Endothelial cell of umbilical vein (primary cell): ENCODE measurements at regions of chr2 and their contacts with region 1.

Region 1: DNA sequence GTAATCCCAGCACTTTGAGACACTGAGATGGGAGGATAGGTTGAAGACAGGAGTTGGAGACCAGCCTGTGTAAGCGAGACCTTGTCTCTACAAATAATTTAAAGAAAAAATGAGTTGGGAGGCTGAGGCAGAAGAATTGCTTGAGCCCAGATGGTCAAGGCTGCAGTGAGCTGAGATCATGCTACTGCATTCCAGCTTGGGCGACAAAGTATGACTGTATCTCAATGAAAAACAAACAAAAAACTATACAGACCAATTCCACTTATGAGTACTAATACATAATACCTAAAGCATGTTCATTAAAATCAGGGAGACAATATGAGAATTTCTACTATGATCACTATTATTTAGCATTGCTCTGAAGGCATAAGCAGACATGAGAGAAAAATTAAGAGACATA is 12.6 kb downstream of the RNF149 start:
- DNase-seq: peak; percentile 60
- H3K4me3 ChIP-seq: no peak overlapping the region
- H3K27ac ChIP-seq: peak overlapping the region; percentile 83
- H3K4me1 ChIP-seq: peaks cover 37% of the 10 kb centered on the region
- H3K27me3 ChIP-seq: no peaks in the 10 kb centered on the region
- CTCF ChIP-seq: no peak
- POLR2A ChIP-seq: no peak

Region 2: GRCh38 chr2:101230541-101230993 is 65.3 kb before region 1 on chr2:
- CTCF ChIA-PET with region 1: no interaction called
- POLR2A ChIA-PET with region 1: no interaction called
- dilution Hi-C with region 1: no loop called
- intact Hi-C with region 1: no loop called
- DNase-seq: no peak
- H3K4me3 ChIP-seq: no peak overlapping the region
- H3K27ac ChIP-seq: no peak overlapping the region
- H3K4me1 ChIP-seq: no peaks in the 10 kb centered on the region
- H3K27me3 ChIP-seq: no peaks in the 10 kb centered on the region
- CTCF ChIP-seq: no peak
- POLR2A ChIP-seq: no peak

Region 3: DNA sequence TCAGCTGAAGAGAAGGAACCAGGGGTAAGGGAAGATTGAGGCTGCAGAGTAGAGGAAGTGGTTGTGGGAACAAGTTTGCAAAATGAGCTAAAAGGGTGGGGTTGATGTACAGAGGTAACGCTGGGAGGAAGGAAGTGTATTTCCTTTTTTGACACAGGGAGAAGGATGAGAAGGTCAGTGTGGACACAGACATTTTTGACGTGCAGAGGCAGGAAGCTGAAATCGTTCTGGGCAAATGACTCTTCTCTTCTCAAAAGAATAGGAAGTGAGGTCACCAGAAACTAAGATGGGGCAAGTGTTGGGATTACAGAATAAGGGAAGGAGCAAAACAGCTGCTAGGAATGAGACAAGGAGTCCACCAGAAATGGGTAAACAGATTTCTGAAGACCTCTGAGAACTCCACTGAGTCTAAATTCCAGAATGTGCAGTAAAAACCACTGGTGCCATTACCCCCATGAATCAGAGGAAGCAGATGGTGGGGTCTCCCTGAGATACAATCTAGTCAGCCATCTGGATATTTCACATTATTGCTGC is 32.6 kb after region 1 on chr2:
- CTCF ChIA-PET with region 1: no interaction called
- POLR2A ChIA-PET with region 1: no interaction called
- dilution Hi-C with region 1: no loop called
- intact Hi-C with region 1: loop called (anchors 1 kb)
- DNase-seq: peak; percentile 98
- H3K4me3 ChIP-seq: peak overlapping the region in 1 of 3 experiments; percentile 1
- H3K27ac ChIP-seq: peak overlapping the region; percentile 95
- H3K4me1 ChIP-seq: peaks cover 37% of the 10 kb centered on the region
- H3K27me3 ChIP-seq: no peaks in the 10 kb centered on the region
- CTCF ChIP-seq: no peak
- POLR2A ChIP-seq: peak; percentile 82